ENCODE measurements at regions of chr10 and their contacts with region 1.

Region 1: DNA sequence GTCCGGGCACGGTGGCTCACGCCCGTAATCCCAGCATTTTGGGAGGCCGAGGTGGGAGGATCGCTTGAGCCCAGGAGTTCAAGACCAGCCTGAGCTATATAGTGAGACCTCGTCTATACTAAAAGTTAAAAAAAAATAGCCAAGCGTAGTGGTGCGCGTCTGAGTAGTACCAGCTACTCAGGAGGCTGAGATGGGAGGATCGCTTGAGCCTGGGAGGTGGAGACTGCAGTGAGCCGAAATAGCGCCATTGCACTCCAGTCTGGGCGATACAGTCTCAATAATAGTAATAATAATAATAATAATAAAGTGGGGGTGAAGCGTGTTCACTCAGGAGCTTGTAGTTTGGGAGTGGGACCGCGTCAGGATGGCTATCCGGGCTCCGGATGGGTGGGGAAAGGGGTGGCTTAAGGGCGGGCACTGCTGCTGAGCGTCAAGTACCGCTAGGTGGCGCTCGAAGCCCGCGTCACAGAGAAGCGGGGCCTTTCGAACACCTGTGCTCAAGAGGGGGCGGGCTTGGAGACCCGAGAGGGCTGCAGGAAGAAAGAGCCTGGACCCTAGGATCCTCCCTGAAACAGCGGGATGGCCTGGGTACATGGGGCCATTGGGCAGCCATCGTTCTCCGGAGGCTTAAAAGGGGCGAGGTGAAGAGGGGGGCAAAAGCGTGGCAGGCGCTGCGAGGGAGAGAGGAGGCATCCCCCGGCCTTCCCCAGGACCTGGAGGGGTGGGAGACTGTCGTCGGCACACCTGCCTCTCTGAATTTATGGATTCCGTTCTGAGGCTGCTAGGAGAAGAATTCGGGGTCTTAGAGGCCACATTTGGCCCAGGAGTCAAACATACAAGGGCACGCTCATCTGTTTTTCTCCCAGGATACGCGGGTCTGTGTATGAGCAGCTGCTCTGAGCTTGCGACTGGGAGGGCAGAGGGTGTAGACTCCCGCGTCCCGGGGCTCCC is 14.5 kb downstream of the LBX1 start:
- DNase-seq: peak; percentile 10
- H3K4me3 ChIP-seq: no peak overlapping the region
- H3K27ac ChIP-seq: no peak overlapping the region
- H3K27me3 ChIP-seq: peaks cover 76% of the 10 kb centered on the region
- CTCF ChIP-seq: peak; percentile 92

Region 2: GRCh38 chr10:101130984-101131961 is 83.4 kb before region 1 on chr10 and contains the start of gene TLX1:
- CTCF ChIA-PET with region 1: no interaction called
- POLR2A ChIA-PET with region 1: no interaction called
- DNase-seq: no peak
- H3K4me3 ChIP-seq: no peak within 1 kb of the TSS
- H3K27ac ChIP-seq: no peak within 1 kb of the TSS
- H3K27me3 ChIP-seq: peaks cover 93% of the 10 kb centered on the region
- CTCF ChIP-seq: no peak
- polyA plus RNA-seq, gene TLX1: not detected in 2 replicates

Region 3: DNA sequence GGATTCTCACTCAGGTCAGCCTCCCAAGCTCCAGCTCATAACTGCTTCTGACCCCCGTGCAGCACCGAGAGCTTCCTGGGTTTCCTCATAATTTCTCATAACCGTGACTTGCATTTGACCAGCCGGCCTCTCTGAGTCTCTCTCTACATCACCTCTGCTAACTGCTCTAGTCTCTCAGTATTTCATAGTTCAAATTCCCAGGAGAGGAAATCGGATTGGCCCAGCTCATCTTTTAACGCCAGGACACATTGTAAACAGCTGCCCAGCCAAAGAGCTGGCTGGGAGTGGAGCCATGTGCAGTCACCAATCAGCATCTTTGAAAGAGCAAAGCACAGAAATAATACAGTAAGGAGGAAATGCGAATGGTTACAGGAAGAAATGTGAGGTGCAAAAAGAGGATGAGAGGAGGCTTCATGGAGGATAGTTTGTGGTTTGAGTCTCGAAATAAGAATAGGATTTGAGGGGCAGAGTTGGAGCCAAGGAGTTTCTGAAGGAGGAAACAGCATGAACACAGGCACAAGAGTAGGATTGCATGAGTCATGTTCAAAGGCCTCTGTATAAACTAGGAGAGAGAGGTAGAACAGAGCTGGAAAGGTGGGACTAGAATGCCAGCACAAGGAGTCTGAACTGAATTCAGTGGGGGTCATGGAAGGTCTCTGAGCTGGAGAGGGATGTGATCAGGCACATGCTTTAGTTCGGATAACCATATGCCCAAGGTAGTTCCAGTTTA is 29.8 kb after region 1 on chr10:
- CTCF ChIA-PET with region 1: interaction called, 11 read pairs
- POLR2A ChIA-PET with region 1: no interaction called
- DNase-seq: peak; percentile 43
- H3K4me3 ChIP-seq: no peak overlapping the region
- H3K27ac ChIP-seq: peak overlapping the region; percentile 77
- H3K27me3 ChIP-seq: peaks cover 29% of the 10 kb centered on the region
- CTCF ChIP-seq: no peak

Region 4: DNA sequence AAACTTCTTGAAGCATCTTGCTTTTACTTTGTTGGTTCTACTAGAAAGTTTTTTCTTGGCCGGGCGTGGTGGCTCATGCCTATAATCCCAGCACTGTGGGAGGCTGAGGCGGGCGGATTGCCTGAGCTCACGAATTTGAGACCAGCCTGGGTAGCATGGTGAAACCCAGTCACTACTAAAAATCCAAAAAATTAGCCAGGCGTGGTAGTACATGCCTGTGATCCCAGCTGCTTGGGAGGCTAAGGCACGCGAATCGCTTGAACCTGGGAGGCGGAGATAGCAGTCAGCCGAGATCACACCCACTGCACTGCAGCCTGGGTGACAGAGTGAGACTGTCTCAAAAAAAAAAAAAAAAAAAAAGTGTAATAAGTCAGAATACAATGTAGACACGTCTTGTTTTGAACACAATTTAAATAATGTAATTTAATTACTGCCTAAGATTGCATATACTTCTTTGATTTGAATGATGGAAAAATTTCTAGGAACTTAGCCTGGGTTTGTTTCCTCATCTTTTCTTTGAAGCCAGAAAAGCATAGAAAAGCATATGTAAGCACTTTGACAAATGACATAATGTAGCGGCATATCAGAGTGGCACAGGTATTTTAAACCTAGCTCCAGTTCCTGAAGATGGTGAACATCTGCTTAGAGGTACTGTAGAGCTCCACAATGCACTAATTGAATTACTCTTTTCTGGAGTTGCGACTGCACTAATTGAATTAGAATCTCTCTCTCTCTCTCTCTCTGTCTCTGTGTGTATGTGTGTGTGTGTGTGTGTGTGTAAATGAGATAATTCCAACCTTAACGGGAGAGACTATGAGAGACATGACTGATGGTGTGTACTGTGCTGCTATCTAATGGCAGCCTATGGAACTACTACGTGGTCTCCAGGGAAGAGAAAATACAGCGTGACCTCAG is 227.1 kb after region 1 on chr10:
- CTCF ChIA-PET with region 1: interaction called, 49 read pairs
- POLR2A ChIA-PET with region 1: no interaction called
- DNase-seq: peak; percentile 30
- H3K4me3 ChIP-seq: no peak overlapping the region
- H3K27ac ChIP-seq: no peak overlapping the region
- H3K27me3 ChIP-seq: no peaks in the 10 kb centered on the region
- CTCF ChIP-seq: peak; percentile 74

Region 5: DNA sequence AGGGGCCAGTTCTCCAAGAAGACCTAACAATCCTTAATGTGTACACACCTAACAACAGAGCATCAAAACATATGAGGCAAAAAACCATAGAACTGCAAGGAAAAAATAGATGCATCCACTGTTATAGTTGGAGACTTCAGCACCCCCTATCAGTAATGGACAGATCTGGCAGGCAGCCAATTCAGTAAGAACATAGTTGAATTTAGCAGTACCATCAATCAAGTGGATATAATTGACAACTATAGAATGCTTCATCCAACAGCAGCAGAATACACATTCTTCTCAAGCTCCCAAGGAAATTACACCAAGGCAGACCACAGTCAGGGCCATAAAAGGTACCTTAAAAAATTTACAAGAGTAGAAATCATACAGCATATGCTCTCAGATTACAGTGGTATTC is 331.2 kb after region 1 on chr10:
- CTCF ChIA-PET with region 1: interaction called, 20 read pairs
- POLR2A ChIA-PET with region 1: no interaction called
- DNase-seq: no peak
- H3K4me3 ChIP-seq: no peak overlapping the region
- H3K27ac ChIP-seq: no peak overlapping the region
- H3K27me3 ChIP-seq: no peaks in the 10 kb centered on the region
- CTCF ChIP-seq: no peak

Region 6: GRCh38 chr10:101587725-101588653 is 373.3 kb after region 1 on chr10 and contains the starts of genes DPCD and POLL:
- CTCF ChIA-PET with region 1: interaction called, 38 read pairs
- POLR2A ChIA-PET with region 1: no interaction called
- DNase-seq: peak; percentile 81
- H3K4me3 ChIP-seq: peak within 1 kb of the TSS; percentile 99
- H3K27ac ChIP-seq: no peak within 1 kb of the TSS
- H3K27me3 ChIP-seq: no peaks in the 10 kb centered on the region
- CTCF ChIP-seq: no peak
- polyA plus RNA-seq, gene DPCD: 49.7 and 51.1 TPM in 2 replicates
- polyA plus RNA-seq, gene POLL: 14.8 and 16.4 TPM in 2 replicates

Region 7: DNA sequence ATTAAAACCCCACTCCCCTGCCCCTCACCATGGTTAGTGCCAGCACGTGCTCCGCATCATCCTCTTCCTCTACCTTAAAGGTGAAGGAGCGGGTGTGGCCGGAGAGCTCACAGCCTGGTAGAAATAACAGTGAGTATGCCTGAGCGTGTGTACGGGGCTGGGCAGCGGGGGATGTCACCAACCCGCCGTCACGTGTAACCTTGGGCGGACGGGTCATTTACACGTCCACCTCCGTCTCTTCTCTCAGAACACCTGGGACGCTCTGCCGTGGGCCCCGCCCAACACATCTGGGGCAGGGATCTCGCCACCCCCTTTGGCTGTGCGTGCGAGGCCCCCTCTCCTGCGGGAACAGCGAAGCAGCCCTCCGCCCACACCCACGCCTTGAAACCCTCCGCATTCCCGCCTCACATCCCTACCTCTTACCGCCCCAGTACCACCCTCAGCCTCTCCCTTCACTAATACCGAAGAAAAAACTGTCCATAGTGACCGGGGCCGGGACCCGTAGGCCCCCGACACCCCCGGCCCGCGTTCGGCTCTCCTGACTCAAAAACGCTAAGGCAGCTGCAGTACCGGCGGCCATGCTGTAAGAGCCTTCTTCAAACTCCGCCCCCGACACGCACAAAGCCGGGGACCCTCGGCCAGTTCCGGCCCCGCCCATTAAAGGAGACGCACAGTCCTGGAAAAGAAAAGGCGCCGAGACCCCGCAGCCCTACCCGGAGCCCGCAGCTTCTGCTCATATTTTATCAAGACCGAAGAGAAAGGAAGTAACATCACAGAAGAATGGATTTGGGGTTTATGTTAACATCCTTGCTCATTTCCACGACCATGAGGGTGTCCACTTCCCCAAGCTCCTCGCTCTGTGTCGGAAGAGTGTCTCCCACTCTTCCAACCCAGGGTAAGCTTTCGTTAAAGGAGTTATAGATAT is 568.4 kb after region 1 on chr10 and contains the start of gene NPM3:
- CTCF ChIA-PET with region 1: interaction called, 68 read pairs
- POLR2A ChIA-PET with region 1: no interaction called
- DNase-seq: peak; percentile 29
- H3K4me3 ChIP-seq: peak within 1 kb of the TSS; percentile 94
- H3K27ac ChIP-seq: peak within 1 kb of the TSS; percentile 25
- H3K27me3 ChIP-seq: peaks cover 10% of the 10 kb centered on the region
- CTCF ChIP-seq: no peak
- polyA plus RNA-seq, gene NPM3: 31.5 and 41.5 TPM in 2 replicates

Measured in AG04450 (cell line).